ENCODE measurements at regions of chr3 and their contacts with region 1.

Region 1: DNA sequence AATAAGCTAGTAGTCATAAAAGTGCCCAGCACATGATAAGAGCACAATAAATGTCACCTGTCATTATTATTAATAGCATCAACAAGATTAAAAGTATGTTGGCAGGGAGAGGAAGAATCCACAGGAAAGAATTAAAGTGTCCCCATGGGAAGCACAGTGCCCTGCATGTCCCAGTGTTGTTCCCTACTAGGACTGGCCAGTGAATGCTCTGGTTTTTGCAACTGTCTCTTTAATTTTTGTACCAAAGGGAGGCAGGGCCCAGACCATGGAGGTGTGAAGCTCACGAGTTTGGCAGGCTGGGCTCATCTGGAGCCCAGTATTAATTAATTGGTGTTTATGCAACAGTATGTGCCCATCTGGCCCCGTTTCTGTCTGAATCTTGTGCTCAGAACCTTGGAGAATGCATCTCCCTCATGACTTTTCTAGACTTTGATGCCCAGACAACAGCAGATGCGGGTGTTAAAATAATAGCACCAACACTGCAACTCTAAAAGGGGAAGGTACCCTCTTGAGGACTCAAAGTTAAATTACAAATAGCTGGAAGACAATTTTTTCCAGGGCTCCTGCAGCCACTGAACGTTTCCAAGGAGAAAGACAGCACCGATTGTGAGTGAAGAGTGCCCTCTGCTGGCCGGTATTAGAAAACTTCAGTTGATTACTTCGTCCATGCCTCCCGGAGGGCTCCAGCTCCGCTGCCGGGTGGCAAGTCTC is 71.9 kb upstream of the SPATA12 start:
- DNase-seq: peak; percentile 82

Region 2: DNA sequence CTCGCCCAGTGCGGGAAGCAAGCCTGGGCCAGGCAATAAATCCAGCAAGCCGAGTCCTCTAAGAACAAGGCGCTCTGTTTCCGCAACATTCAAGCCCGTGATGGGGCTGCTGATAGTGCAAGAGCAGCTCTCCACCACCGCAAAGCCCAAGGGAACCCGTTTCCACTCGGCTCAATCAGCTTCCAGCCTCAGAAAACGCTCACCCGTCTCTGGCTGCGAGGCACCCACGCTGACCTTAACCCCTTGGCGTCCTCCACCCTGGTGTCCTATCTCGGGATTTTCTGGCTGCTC is 89.7 kb after region 1 on chr3:
- in situ Hi-C with region 1: loop called (anchors 25 kb)
- DNase-seq: peak; percentile 91

Region 3: DNA sequence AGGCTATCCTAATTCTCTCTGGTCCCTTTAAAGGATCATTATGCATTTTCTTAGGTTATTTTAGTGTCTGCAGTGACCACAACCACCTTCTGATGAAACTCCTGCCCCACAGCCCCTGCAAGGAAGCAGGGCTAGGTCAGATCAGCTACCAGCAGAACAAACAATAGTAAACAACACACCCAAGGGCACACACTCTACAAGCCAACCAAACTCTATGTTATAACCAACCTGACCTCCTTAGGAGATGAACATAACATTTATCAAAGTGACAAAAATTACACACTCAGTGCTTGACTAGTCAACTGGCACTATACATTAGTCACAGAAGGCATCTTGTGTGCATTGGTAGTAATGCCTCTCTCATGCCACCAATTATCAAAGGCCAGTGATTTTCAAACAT is 686.9 kb after region 1 on chr3:
- in situ Hi-C with region 1: no loop called
- DNase-seq: no peak

Measured in SK-MEL-5 (cell line).